CD8-positive, alpha-beta memory T cell (primary cell): ENCODE measurements at regions of chr6 and their contacts with region 1.

Region 1: DNA sequence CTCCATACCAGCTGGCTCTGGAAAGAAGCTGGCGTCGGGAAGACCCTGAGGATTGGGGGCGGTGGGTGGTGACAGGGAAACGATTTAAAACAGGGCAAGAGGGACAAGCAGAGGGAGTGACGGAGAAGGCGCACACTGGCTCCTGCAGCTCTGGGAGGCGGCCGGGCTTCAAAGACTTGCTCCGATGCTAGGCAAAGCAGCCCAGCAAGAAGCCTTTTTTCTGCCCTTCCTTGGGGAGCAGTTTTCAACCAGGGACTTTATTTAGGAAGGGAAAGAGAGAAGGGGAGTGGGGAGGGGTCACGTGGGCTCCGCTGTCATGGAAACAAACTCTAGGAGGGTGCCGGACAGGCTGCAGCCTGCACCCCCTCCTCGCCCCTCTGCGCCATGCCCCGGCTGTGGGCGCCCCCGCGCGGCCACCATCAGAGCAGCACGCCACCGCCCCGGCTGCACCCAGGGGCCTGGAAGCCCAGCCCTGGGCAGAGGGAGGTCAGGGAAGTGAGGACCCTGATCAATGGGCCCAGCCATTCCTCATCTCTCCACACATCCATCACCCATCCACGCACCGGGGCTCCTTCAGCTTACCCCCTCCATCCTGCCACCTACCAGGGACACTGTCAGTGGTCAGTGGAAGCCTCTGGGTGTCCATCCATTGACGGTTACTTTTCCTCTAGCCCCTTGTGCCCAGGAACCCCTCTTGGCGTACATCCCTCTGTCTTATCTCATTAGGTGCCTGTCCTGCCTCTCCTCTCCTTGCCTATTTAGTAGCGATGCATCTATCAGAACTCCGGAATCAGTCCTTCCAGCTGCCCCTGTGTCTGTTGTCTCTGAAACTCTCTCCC is 66.6 kb upstream of the CCDC167 start:
- DNase-seq: peak; percentile 62 to 80 (median 65)
- H3K4me3 ChIP-seq: peak overlapping the region; percentile 27
- H3K4me3 Mint-ChIP-seq: peak overlapping the region; percentile 8 to 86 (median 65)
- H3K27ac ChIP-seq: no peak overlapping the region
- H3K27ac Mint-ChIP-seq: peak overlapping the region in 5 of 8 donors; percentile 74 to 83 (median 77)
- H3K4me1 ChIP-seq: peaks cover 9% of the 10 kb centered on the region
- H3K4me1 Mint-ChIP-seq: peaks cover 3 to 6% (median 5%) of the 10 kb centered on the region in 3 donors
- H3K27me3 ChIP-seq: no peaks in the 10 kb centered on the region
- H3K27me3 Mint-ChIP-seq: peaks cover 6 to 12% of the 10 kb centered on the region in 2 donors

Region 2: DNA sequence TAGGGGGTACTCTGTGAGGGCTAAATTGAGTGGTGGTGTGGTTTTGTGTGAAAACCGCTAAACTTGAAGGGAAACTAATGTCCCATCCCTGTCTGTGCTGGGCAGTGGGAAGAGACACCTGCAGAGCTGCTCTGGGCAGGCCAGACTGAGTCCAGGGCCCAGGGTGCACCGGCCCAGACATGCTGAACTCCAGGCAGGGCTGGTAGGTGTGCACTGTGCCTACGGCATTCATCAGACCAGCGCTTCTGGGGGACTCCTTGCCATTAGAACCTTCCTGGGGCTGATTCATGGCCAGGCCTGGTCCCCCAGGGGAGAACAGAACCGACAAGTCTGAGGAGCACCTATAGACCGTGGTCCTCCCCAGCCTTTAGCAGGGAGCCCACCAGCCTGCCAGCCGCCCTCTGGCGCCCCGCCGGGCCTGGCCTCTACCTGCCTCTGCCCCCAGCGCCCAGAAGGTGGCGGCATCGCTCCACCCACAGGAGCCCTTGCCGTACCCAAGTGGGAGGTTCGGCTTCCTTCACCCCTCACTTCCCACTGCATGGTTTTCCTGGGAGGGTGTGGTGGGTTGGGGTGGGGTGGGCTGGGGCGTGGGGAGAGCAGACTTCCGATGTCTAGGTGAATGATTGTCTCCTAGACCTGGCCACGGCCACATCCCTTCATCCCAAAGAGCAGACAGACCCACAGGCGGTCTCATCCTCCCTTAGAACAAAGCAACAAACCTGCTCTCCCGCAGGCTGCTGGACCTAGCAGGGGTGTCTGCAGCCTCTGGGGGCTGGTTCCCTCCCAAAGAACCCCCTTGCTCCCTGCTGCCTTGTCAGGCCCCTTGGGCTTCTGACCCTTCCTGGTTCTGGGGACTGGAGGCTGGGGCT is 82.2 kb before region 1 on chr6:
- CTCF ChIA-PET with region 1: interaction called, 30 read pairs
- POLR2A ChIA-PET with region 1: no interaction called
- DNase-seq: peak; percentile 71 to 85 (median 72)
- H3K4me3 ChIP-seq: no peak overlapping the region
- H3K4me3 Mint-ChIP-seq: no peak overlapping the region
- H3K27ac ChIP-seq: peak overlapping the region; percentile 24
- H3K27ac Mint-ChIP-seq: peak overlapping the region in 7 of 8 donors; percentile 7 to 88 (median 47)
- H3K4me1 ChIP-seq: peaks cover 14% of the 10 kb centered on the region
- H3K4me1 Mint-ChIP-seq: peaks cover 24 to 40% (median 24%) of the 10 kb centered on the region in 3 donors
- H3K27me3 ChIP-seq: no peaks in the 10 kb centered on the region
- H3K27me3 Mint-ChIP-seq: no peaks in the 10 kb centered on the region

Region 3: GRCh38 chr6:37489660-37490361 is 76.5 kb before region 1 on chr6:
- CTCF ChIA-PET with region 1: interaction called, 30 read pairs
- POLR2A ChIA-PET with region 1: no interaction called
- DNase-seq: peak in 4 of 5 donors; percentile 18 to 71 (median 46)
- H3K4me3 ChIP-seq: no peak overlapping the region
- H3K4me3 Mint-ChIP-seq: peak overlapping the region; percentile 11 to 86 (median 65)
- H3K27ac ChIP-seq: peak overlapping the region; percentile 52
- H3K27ac Mint-ChIP-seq: peak overlapping the region; percentile 92 to 99 (median 96)
- H3K4me1 ChIP-seq: peaks cover 44% of the 10 kb centered on the region
- H3K4me1 Mint-ChIP-seq: peaks cover 72 to 87% (median 79%) of the 10 kb centered on the region in 3 donors
- H3K27me3 ChIP-seq: no peaks in the 10 kb centered on the region
- H3K27me3 Mint-ChIP-seq: no peaks in the 10 kb centered on the region

Region 4: DNA sequence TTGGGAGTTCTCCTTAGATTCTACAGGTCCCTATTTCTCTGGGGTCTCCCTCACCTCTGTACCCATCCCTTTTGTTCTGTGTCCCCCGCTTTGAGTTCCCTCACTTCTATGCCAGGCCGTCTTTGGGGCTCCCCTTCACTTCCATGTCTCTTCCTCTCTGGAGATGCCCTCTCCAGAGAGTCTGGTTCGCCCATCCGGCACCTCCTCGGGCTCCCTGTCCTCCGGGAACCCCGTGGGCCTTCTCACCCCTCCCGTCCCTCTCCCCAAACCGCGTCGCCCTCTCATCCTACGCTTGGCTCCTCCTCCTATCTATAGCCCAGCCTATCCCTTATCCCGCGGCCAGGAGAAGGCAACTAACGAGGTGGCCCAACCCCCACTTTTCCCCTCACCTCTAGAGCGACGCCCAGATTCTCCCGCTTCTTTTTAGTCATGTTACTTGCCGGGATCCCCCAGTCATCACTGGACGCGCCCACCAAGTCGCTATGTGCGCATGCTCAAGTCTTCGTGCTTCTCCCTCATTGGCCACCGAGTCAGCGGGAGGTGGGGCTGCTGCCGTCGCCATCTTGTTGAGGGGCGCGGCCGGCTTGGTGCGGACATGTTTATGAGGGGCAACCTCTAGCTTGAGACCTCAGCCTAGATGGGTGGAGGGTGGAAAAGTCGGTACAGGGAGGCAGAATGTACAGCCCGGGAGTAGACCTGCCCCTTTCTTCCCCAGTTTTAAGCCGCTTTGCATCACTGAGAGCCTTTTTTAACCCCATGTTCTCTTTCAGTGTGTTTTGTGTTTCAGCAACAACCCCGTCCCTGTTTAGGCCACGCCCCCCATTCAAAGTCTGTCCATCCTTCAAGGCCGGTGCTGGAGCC is 66.7 kb before region 1 on chr6 and contains the start of gene CCDC167:
- CTCF ChIA-PET with region 1: interaction called, 37 read pairs
- POLR2A ChIA-PET with region 1: interaction called, 3 read pairs
- DNase-seq: peak; percentile 93 to 98 (median 95)
- H3K4me3 ChIP-seq: peak within 1 kb of the TSS; percentile 89
- H3K4me3 Mint-ChIP-seq: peak within 1 kb of the TSS; percentile 93 to 100 (median 97)
- H3K27ac ChIP-seq: peak within 1 kb of the TSS; percentile 93
- H3K27ac Mint-ChIP-seq: peak within 1 kb of the TSS; percentile 97 to 100 (median 100)
- H3K4me1 ChIP-seq: peaks cover 71% of the 10 kb centered on the region
- H3K4me1 Mint-ChIP-seq: peaks cover 72 to 99% (median 94%) of the 10 kb centered on the region in 3 donors
- H3K27me3 ChIP-seq: no peaks in the 10 kb centered on the region
- H3K27me3 Mint-ChIP-seq: no peaks in the 10 kb centered on the region
- total RNA-seq, gene CCDC167: 79.5 to 86.3 TPM

Region 5: DNA sequence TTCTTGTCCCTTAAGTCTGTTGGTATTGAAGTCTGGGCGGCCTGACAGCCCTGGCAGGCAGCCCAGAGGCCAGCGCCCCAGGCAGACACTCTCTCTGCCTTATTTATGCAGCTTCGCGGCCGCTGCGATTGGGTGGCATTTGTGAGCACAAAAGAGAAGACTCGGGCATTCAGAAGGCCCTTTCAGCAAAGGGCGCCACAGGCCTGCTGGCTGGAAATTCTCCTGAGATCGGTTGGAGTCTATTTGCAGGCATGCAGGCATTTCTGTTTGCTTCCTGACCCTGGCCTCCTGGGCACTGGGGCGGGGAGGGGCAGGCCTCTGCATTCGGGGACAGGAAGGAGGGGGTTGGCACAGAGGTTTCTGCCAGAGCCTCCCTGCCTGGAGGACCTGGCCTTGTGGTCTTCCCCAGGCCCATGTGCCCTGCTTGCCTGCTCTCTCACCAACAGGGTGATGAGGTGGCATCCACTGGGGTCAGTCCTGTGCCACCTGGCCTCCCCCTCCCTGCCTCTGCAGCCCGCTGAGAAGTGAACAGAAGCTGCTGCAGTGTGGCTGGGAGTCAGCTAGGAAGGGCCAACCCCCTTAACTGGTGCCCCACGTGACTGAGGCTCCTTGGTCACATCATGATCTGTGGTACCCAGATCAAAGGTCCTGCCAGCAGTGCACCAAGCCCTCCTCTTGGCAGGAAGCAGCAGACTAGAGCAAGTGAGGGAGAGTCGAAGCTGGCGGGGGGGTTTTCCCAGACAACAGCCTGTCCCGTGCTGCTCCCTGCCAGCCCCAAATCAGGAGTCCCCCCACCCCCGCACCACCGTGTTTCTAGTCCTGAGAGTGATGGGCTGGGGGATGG is 50.0 kb before region 1 on chr6:
- CTCF ChIA-PET with region 1: interaction called, 22 read pairs
- POLR2A ChIA-PET with region 1: interaction called, 7 read pairs
- DNase-seq: peak; percentile 88 to 97 (median 93)
- H3K4me3 ChIP-seq: peak overlapping the region; percentile 79
- H3K4me3 Mint-ChIP-seq: peak overlapping the region; percentile 77 to 96 (median 90)
- H3K27ac ChIP-seq: peak overlapping the region; percentile 98
- H3K27ac Mint-ChIP-seq: peak overlapping the region; percentile 93 to 100 (median 100)
- H3K4me1 ChIP-seq: peaks cover 90% of the 10 kb centered on the region
- H3K4me1 Mint-ChIP-seq: peaks cover 87 to 91% (median 91%) of the 10 kb centered on the region in 3 donors
- H3K27me3 ChIP-seq: no peaks in the 10 kb centered on the region
- H3K27me3 Mint-ChIP-seq: peaks cover 0 to 5% of the 10 kb centered on the region in 2 donors

Region 6: GRCh38 chr6:37538107-37538506 is 28.2 kb before region 1 on chr6:
- CTCF ChIA-PET with region 1: interaction called, 34 read pairs
- POLR2A ChIA-PET with region 1: interaction called, 4 read pairs
- DNase-seq: no peak
- H3K4me3 ChIP-seq: no peak overlapping the region
- H3K4me3 Mint-ChIP-seq: peak overlapping the region in 1 of 7 donors; percentile 31
- H3K27ac ChIP-seq: no peak overlapping the region
- H3K27ac Mint-ChIP-seq: peak overlapping the region in 5 of 8 donors; percentile 12 to 90 (median 66)
- H3K4me1 ChIP-seq: no peaks in the 10 kb centered on the region
- H3K4me1 Mint-ChIP-seq: peaks cover 7 to 29% (median 10%) of the 10 kb centered on the region in 3 donors
- H3K27me3 ChIP-seq: no peaks in the 10 kb centered on the region
- H3K27me3 Mint-ChIP-seq: peaks cover 0 to 2% of the 10 kb centered on the region in 2 donors

Region 7: GRCh38 chr6:37554480-37554819 is 11.9 kb before region 1 on chr6:
- CTCF ChIA-PET with region 1: interaction called, 24 read pairs
- POLR2A ChIA-PET with region 1: no interaction called
- DNase-seq: no peak
- H3K4me3 ChIP-seq: no peak overlapping the region
- H3K4me3 Mint-ChIP-seq: no peak overlapping the region
- H3K27ac ChIP-seq: no peak overlapping the region
- H3K27ac Mint-ChIP-seq: peak overlapping the region in 4 of 8 donors; percentile 31 to 77 (median 59)
- H3K4me1 ChIP-seq: peaks cover 5% of the 10 kb centered on the region
- H3K4me1 Mint-ChIP-seq: peaks cover 19 to 40% (median 38%) of the 10 kb centered on the region in 3 donors
- H3K27me3 ChIP-seq: no peaks in the 10 kb centered on the region
- H3K27me3 Mint-ChIP-seq: peaks cover 0 to 2% of the 10 kb centered on the region in 2 donors

Region 8: DNA sequence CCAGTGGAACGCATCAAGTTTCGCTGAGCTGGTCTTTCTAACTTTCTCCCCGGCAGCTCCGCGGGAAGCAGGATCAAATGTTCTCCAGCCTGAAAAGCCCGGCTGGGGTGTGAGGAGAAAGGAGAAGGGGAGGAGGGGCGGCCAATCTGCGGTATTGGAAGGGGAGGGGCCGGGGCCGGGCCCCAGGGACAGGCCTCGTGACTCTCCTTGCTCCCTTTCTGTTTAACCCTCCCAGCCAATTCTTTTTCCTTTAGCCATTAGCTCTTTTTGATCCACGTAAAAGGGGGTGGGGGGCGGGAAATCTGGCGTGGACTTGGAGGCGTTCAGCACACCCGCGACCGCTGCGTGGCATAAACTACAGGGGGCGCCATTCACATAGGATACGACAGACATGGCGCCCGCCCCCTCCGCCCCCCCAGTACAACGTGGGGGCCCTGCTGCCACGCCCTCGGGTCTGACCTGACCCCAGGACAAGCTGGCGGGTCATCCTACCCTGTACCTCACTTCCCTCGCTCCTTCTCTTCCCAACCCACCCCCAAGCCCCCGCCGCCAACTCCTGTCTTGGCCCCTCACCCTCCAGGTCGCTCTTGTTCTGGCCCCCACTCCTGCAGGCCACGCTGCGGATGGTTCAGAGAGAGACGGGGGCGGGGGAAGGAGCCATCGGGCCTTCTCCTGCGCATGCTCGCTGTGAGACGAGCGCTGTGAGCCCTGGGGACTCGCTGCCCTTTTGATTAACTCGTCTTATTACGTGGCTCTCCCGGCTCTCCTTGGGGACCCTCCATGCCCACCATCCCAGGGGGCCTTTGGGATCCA is 139.1 kb after region 1 on chr6:
- CTCF ChIA-PET with region 1: no interaction called
- POLR2A ChIA-PET with region 1: no interaction called
- DNase-seq: peak; percentile 62 to 83 (median 75)
- H3K4me3 ChIP-seq: peak overlapping the region; percentile 38
- H3K4me3 Mint-ChIP-seq: peak overlapping the region; percentile 82 to 89 (median 86)
- H3K27ac ChIP-seq: peak overlapping the region; percentile 8
- H3K27ac Mint-ChIP-seq: peak overlapping the region; percentile 23 to 91 (median 82)
- H3K4me1 ChIP-seq: peaks cover 5% of the 10 kb centered on the region
- H3K4me1 Mint-ChIP-seq: peaks cover 11 to 18% (median 15%) of the 10 kb centered on the region in 3 donors
- H3K27me3 ChIP-seq: no peaks in the 10 kb centered on the region
- H3K27me3 Mint-ChIP-seq: peaks cover 0 to 6% of the 10 kb centered on the region in 2 donors